ENCODE measurements at regions of chr5 and their contacts with region 1.

Region 1: DNA sequence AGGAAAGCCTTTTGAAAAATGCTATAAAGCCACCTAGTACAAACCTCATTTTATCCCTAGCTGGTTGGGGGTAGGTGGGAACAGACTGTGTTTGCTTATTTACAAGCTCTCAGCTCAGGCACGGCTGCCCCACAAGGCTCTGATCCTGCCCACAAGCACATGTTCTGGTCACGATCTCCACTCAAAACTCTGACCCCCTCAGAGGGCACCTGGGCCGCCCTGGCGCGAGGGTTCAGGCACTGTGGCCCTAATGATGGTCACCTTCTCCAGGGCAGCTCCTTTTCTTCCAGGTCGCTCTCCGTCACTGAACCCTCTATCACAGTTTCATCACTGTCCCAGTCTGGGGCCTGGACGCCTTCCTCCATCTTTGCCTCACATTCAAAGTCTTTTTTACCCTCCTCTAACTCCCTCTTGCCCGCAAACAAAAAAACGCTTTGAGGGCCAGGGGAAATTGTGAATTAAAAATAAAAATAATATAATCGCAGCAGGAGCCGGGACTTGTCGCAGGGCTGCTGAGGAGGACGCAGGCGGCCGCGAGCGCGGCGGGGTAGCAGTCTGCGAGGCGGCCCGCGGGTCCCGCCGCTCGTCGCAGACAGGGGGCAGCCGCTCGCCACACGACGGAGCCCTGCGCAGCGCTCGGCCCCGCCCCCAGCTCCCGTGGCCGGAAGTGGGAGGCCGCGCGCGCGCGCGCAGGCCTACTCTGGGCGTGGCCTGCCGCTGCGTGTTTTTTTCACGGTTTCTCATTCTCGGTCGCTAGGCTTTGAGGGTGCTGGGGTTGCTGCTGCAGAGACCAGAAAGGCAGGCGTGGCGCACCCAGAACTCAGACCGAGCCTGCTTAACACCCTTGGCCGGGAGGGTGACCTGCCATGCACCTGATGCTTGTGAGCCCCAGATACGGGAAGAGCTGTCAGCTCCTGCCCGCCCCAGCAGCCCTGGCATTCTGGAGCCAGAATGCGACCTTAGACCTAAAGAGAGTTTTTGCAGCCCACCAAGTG is at the start of gene ANKRD31:
- DNase-seq: peak; percentile 95
- CTCF ChIP-seq: peak; percentile 80

Region 2: GRCh38 chr5:75049456-75050351 is 186.9 kb before region 1 on chr5:
- CTCF ChIA-PET with region 1: interaction called, 14 read pairs
- POLR2A ChIA-PET with region 1: no interaction called
- DNase-seq: peak; percentile 43
- CTCF ChIP-seq: peak; percentile 67

Region 3: DNA sequence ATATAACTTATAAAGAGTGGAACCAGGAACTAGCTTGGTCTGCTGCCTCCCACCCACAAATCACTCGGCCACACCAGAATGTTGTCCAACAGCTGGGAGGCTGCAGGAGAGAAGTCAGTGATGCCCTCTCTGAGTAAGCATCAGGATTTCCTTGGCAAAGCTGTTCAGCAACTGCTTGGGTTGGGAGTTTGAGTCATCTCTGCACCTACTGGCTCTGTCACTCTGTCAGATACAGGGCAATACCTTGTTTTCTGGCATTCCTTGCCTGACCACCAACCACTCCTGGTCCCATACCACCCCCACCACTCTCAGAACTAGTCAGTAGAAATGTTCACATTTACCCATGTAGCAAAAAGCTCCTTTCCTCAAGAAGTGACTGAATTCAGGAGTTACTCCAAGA is 147.5 kb before region 1 on chr5:
- CTCF ChIA-PET with region 1: no interaction called
- POLR2A ChIA-PET with region 1: no interaction called
- DNase-seq: no peak
- CTCF ChIP-seq: no peak

Region 4: GRCh38 chr5:75214928-75215327 is 21.7 kb before region 1 on chr5:
- CTCF ChIA-PET with region 1: interaction called, 10 read pairs
- POLR2A ChIA-PET with region 1: no interaction called
- DNase-seq: no peak
- CTCF ChIP-seq: no peak

Region 5: DNA sequence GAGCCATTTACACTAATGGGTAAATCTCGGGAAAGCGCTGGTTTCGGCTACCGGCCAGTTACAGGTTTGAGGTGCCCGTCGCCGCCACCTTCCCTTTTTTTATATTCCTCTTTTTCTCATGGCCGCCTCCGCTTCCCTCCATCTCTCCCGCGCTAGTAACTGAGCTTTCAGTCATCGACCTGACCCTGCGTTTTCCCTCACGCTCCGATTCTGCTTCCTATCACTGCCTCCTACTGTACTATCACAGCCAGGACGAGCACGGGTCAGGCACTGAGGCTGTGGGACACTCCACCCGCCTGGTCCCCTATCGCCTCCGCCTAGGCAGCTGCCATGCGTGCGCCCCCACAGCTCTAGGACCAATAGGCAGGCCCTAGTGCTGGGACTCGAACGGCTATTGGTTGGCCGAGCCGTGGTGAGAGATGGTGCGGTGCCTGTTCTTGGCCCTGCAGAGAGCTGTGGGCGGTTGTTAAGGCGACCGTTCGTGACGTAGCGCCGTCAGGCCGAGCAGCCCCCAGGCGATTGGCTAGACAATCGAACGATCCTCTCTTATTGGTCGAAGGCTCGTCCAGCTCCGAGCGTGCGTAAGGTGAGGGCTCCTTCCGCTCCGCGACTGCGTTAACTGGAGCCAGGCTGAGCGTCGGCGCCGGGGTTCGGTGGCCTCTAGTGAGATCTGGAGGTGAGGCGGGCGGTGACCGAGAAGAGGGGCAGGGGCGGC is 100.2 kb after region 1 on chr5 and contains the start of gene HMGCR:
- CTCF ChIA-PET with region 1: interaction called, 19 read pairs
- POLR2A ChIA-PET with region 1: no interaction called
- DNase-seq: peak; percentile 95
- CTCF ChIP-seq: peak; percentile 51

Region 6: GRCh38 chr5:75681125-75681830 is 444.7 kb after region 1 on chr5:
- CTCF ChIA-PET with region 1: interaction called, 17 read pairs
- POLR2A ChIA-PET with region 1: no interaction called
- DNase-seq: peak; percentile 29
- CTCF ChIP-seq: peak; percentile 58